CD8-positive, alpha-beta memory T cell (primary cell): ENCODE measurements at regions of chr11 and their contacts with region 1.

Region 1: DNA sequence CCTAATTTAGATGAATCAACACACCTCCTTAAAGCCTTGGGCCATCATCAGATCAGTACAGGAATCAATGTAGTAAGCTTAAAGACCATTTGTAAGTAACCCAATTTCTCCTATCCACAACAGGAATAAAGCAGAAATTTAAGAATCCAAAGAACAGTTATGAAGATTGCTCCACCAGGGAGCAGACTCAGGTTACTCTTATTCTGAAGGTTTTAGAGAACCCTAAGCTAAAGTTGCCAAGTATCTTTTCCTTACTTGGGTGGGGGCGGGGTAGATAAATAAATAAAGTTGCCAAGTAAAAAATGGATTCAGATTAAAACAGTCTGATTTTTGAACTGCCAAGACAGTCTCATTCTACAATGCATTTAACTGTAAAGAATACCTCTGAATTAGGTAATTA is 18.1 kb downstream of the CKAP5 start:
- DNase-seq: no peak
- H3K4me3 ChIP-seq: no peak overlapping the region
- H3K4me3 Mint-ChIP-seq: peak overlapping the region in 1 of 7 donors; percentile 33
- H3K27ac ChIP-seq: no peak overlapping the region
- H3K27ac Mint-ChIP-seq: peak overlapping the region in 3 of 8 donors; percentile 1 to 15 (median 12)
- H3K4me1 ChIP-seq: peaks cover 16% of the 10 kb centered on the region
- H3K4me1 Mint-ChIP-seq: peaks cover 23 to 66% (median 47%) of the 10 kb centered on the region in 3 donors
- H3K27me3 ChIP-seq: no peaks in the 10 kb centered on the region
- H3K27me3 Mint-ChIP-seq: no peaks in the 10 kb centered on the region

Region 2: GRCh38 chr11:46760429-46761128 is 67.4 kb before region 1 on chr11:
- CTCF ChIA-PET with region 1: no interaction called
- POLR2A ChIA-PET with region 1: no interaction called
- DNase-seq: no peak
- H3K4me3 ChIP-seq: no peak overlapping the region
- H3K4me3 Mint-ChIP-seq: no peak overlapping the region
- H3K27ac ChIP-seq: no peak overlapping the region
- H3K27ac Mint-ChIP-seq: peak overlapping the region in 1 of 8 donors; percentile 13
- H3K4me1 ChIP-seq: no peaks in the 10 kb centered on the region
- H3K4me1 Mint-ChIP-seq: no peaks in the 10 kb centered on the region
- H3K27me3 ChIP-seq: no peaks in the 10 kb centered on the region
- H3K27me3 Mint-ChIP-seq: no peaks in the 10 kb centered on the region

Region 3: GRCh38 chr11:47642099-47642855 is 814.3 kb after region 1 on chr11 and contains the start of gene MTCH2:
- CTCF ChIA-PET with region 1: no interaction called
- POLR2A ChIA-PET with region 1: interaction called, 13 read pairs
- DNase-seq: peak; percentile 94 to 97 (median 96)
- H3K4me3 ChIP-seq: peak within 1 kb of the TSS; percentile 83
- H3K4me3 Mint-ChIP-seq: peak within 1 kb of the TSS; percentile 87 to 98 (median 94)
- H3K27ac ChIP-seq: peak within 1 kb of the TSS; percentile 91
- H3K27ac Mint-ChIP-seq: peak within 1 kb of the TSS; percentile 76 to 99 (median 95)
- H3K4me1 ChIP-seq: peaks cover 14% of the 10 kb centered on the region
- H3K4me1 Mint-ChIP-seq: peaks cover 18 to 34% (median 32%) of the 10 kb centered on the region in 3 donors
- H3K27me3 ChIP-seq: no peaks in the 10 kb centered on the region
- H3K27me3 Mint-ChIP-seq: no peaks in the 10 kb centered on the region
- total RNA-seq, gene MTCH2: 124 to 131 TPM